SK-N-SH (cell line): ENCODE measurements at regions of chr2 and their contacts with region 1.

Region 1: GRCh38 chr2:55050133-55050994 is at the start of gene RTN4:
- DNase-seq: peak; percentile 96
- H3K4me3 ChIP-seq: peak within 1 kb of the TSS; percentile 95 to 99
- H3K27ac ChIP-seq: peak within 1 kb of the TSS; percentile 98 to 100
- H3K4me1 ChIP-seq: peaks cover 1 to 13% of the 10 kb centered on the region in 2 experiments; a peak in 3 of 4 replicates
- H3K27me3 ChIP-seq: no peaks in the 10 kb centered on the region
- CTCF ChIP-seq: 0 out of 2 replicates have a peak, but pooled peaks have one; percentile 14
- EP300 ChIP-seq: peak in 1 of 2 experiments; percentile 59; a peak in 1 of 4 replicates
- RAD21 ChIP-seq: no peak
- polyA plus RNA-seq, gene RTN4: 225 and 315 TPM in 2 replicates

Region 2: DNA sequence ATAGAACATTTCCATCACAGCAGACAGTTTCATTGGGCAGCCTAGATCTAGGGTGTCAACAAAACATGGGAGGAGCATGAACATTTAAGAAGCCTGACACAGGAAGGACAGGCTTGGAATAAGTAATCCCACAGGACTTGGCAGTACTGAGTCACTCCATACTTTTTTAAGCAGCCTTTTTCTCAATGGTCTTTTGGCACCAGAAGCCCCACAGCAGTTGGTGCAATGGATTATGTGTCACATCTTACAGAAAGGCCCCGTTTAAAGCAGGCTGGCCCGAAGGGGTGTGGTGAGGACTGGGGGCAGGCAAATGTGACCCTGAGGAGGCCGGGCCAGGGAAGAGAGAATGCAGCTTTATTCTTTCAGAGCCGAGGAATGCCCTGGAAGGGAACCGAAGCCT is 567.6 kb before region 1 on chr2:
- CTCF ChIA-PET with region 1: no interaction called
- POLR2A ChIA-PET with region 1: no interaction called
- DNase-seq: no peak
- H3K4me3 ChIP-seq: no peak overlapping the region
- H3K27ac ChIP-seq: peak overlapping the region in 1 of 2 experiments; percentile 59; a peak in 3 of 4 replicates
- H3K4me1 ChIP-seq: peaks cover 8 to 21% of the 10 kb centered on the region in 2 experiments
- H3K27me3 ChIP-seq: no peaks in the 10 kb centered on the region
- CTCF ChIP-seq: no peak
- EP300 ChIP-seq: no peak
- RAD21 ChIP-seq: no peak

Region 3: DNA sequence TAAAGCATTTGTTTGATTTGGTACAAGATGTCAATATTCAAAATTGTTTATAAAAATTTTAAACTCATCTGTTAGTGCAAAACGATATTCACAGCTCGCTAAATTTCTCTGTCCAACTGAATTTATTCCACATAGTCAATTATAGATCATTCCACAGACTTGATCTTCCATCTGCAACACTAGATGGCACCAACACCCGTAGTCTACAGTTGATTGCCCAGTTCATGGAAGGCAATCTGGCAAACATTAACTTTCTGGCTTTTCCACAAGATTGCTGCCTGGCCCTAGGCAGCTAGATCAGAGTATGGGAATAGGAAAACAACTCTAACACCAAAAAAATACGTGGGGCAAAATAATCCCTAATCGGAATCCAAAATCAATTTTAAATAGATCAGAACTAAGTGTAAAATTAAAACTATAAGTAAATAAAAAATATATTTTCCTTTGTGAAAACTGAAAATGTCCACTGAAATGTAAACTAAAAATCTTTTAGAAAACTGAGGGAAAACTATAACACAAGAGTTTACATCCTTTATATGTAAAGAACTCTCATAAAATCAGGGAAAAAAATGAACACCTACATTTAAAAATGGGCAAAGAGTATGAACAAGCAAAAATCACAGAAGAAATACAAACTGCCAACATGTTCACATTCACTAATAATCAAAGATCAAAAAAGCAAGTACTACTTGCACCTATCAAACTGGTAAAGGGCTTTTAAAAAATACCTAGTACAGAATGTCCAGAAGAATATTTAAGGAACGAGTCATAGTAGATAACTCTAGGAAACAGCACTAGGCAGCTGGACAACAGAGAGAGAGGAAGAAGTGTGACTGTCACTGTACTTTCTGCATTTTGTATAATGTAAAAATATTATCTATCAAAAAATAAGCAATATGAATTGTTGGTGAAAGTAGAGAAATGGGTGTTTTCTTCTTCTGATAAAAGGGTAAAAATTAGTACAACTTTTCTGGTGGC is 35.1 kb before region 1 on chr2:
- CTCF ChIA-PET with region 1: interaction called, 17 read pairs
- POLR2A ChIA-PET with region 1: interaction called, 4 read pairs
- DNase-seq: peak; percentile 55
- H3K4me3 ChIP-seq: no peak overlapping the region; a peak in 1 of 4 replicates
- H3K27ac ChIP-seq: peak overlapping the region; percentile 14 to 53
- H3K4me1 ChIP-seq: peaks cover 6 to 58% of the 10 kb centered on the region in 2 experiments; a peak in 3 of 4 replicates
- H3K27me3 ChIP-seq: no peaks in the 10 kb centered on the region
- CTCF ChIP-seq: peak; percentile 68
- EP300 ChIP-seq: no peak
- RAD21 ChIP-seq: peak; percentile 93

Region 4: DNA sequence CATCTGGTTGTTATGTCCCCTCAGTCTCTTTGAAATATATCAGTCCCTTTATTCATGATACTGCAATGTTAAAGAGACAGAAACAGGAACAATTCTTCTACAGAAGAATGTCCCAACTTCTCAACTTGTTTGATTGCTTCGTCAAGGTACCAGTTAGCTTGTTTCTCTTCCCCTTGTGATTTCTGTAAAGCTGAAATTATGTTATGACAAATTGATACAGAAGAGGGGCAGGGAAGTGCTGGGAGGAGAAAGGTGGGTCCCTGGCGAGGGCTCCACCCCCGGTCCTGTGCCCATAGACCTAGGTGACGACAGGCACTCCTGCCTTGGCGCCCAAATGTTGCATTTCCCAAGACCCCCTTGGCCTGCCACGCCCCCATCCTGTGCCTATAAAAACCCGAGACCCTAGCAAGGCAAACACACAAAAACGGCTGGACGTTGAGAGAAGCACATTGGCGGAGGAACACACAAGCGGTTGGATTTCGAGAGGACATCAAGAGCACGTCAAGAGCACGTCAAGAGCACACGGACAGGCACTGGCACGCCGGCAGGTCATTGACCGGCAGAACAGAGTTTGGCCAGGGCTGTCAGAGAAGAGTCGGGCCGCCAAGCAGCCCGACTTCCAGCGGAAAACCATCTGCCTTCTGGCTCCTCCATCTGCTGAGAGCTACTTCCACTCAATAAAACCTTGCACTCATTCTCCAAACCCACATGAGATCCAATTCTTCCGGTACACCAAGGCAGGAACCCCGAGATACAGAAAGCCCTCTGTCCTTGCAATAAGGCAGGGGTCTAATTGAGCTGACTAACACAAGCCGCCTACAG is 11.4 kb after region 1 on chr2:
- CTCF ChIA-PET with region 1: interaction called, 14 read pairs
- POLR2A ChIA-PET with region 1: interaction called, 3 read pairs
- DNase-seq: no peak
- H3K4me3 ChIP-seq: no peak overlapping the region
- H3K27ac ChIP-seq: no peak overlapping the region
- H3K4me1 ChIP-seq: no peaks in the 10 kb centered on the region
- H3K27me3 ChIP-seq: no peaks in the 10 kb centered on the region
- CTCF ChIP-seq: no peak
- EP300 ChIP-seq: no peak
- RAD21 ChIP-seq: no peak

Region 5: GRCh38 chr2:55157474-55157884 is 107.1 kb after region 1 on chr2:
- CTCF ChIA-PET with region 1: interaction called, 12 read pairs
- POLR2A ChIA-PET with region 1: interaction called, 3 read pairs
- DNase-seq: peak; percentile 37
- H3K4me3 ChIP-seq: no peak overlapping the region; a peak in 1 of 4 replicates
- H3K27ac ChIP-seq: peak overlapping the region; percentile 90 to 96
- H3K4me1 ChIP-seq: peaks cover 29 to 44% of the 10 kb centered on the region in 2 experiments
- H3K27me3 ChIP-seq: no peaks in the 10 kb centered on the region
- CTCF ChIP-seq: peak; percentile 22; the same call in 1 of the 2 replicates
- EP300 ChIP-seq: no peak
- RAD21 ChIP-seq: no peak

Region 6: DNA sequence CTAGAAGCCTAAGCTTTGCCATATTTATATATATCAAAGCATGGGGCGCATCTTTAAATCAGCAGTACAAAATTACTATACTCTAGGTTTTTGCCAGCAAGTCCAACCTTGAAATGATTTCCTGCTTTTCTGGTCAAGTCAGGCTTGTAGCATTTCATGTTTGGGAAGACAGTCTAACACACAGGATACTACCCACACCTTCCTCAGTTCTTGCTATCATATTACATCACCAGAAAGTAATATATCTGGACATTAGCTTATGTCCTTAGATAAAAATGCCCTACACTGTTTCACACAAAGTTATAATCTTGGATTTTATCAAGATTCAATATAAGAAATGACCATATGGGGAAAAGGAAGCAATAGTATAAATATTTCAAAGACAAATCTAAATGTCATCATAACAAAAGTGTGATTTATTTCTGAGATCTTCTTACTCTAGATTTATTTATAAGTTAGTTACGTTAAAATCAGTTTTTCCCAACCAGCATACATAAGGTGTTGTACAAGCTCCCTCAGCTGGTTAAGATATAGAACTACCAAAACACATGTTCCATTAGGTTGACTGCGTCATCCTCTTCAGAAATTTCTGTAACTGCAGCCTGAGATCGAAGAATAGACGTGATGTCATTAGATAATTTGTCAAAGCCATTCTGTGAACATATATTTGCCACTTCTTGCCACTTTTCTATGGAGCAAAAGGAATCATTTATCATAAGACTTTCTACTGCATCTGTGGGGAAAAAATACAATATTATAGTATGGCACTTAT is 125.1 kb after region 1 on chr2:
- CTCF ChIA-PET with region 1: interaction called, 16 read pairs
- POLR2A ChIA-PET with region 1: interaction called, 10 read pairs
- DNase-seq: peak; percentile 45
- H3K4me3 ChIP-seq: no peak overlapping the region
- H3K27ac ChIP-seq: no peak overlapping the region
- H3K4me1 ChIP-seq: peaks cover 0 to 3% of the 10 kb centered on the region in 2 experiments; a peak in 3 of 4 replicates
- H3K27me3 ChIP-seq: no peaks in the 10 kb centered on the region
- CTCF ChIP-seq: peak; percentile 77
- EP300 ChIP-seq: no peak
- RAD21 ChIP-seq: peak; percentile 84